Colonic mucosa (tissue), 4 donors: ENCODE measurements at regions of chr12 and their contacts with region 1.

Region 1: GRCh38 chr12:119659289-119659897 is 8.5 kb upstream of the PRKAB1 start:
- DNase-seq: peak; percentile 43
- H3K4me3 ChIP-seq: no peak overlapping the region
- H3K27ac ChIP-seq: no peak overlapping the region
- H3K4me1 ChIP-seq: no peaks in the 10 kb centered on the region
- H3K27me3 ChIP-seq: no peaks in the 10 kb centered on the region
- CTCF ChIP-seq: peak; percentile 95

Region 2: DNA sequence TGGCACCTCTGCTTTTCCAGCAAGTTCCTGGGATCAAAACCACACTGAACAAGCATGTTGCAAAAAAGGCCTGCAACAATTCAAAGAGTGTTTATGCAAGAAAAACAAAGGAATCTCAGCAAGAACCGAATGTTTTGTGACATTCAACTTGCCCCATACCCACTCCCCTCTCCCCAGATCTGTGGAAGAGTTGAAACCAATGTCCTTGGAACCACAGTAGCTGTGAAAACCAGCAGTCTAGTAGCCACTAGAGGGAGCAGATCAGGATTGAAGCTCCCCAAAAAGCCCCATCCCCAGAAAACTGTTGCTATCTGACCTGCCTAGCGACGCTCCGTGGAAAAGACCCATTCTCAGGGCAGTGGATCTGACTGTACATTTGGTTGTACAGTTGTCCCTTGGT is 35.6 kb after region 1 on chr12:
- intact Hi-C with region 1: loop called (anchors 5 kb)
- DNase-seq: no peak
- H3K4me3 ChIP-seq: no peak overlapping the region
- H3K27ac ChIP-seq: no peak overlapping the region
- H3K4me1 ChIP-seq: peaks cover 8% of the 10 kb centered on the region
- H3K27me3 ChIP-seq: no peaks in the 10 kb centered on the region
- CTCF ChIP-seq: peak; percentile 37

Region 3: GRCh38 chr12:119705182-119705581 is 45.8 kb after region 1 on chr12:
- intact Hi-C with region 1: no loop called
- DNase-seq: no peak
- H3K4me3 ChIP-seq: no peak overlapping the region
- H3K27ac ChIP-seq: no peak overlapping the region
- H3K4me1 ChIP-seq: no peaks in the 10 kb centered on the region
- H3K27me3 ChIP-seq: no peaks in the 10 kb centered on the region
- CTCF ChIP-seq: no peak

Region 4: DNA sequence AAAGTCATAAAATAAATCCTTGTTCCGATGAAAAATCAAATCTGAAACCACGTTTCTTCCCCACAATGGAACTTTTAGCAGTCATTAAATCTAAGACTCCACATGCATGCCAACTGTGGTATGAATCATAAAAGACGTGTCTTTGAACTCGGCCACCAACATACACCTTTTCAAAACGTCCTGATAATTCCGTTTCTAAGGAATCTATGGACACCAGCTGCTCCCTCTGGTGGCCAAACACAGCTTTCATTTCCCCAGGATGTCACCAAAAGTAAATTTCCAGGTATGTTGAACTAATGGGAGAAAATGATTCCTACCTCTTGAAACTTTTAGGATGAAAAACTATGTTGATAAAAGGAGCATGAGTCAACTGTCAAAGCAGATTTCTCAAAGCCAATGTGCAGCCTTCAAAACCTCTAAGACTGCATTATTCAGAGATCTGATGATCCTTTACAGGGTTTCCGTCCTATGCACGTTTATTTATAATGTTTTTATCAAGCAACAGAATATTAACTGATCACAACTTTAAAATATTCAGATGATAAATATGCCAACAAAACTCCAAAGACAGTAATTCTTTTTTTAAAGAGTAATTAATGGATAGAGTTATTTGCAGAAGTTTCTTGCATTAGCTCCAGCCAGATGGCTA is 121.5 kb after region 1 on chr12:
- intact Hi-C with region 1: loop called (anchors 5 kb)
- DNase-seq: peak; percentile 61
- H3K4me3 ChIP-seq: no peak overlapping the region
- H3K27ac ChIP-seq: no peak overlapping the region
- H3K4me1 ChIP-seq: no peaks in the 10 kb centered on the region
- H3K27me3 ChIP-seq: no peaks in the 10 kb centered on the region
- CTCF ChIP-seq: peak; percentile 76